GM18951 (cell line): ENCODE measurements at regions of chr10 and their contacts with region 1.

Region 1: DNA sequence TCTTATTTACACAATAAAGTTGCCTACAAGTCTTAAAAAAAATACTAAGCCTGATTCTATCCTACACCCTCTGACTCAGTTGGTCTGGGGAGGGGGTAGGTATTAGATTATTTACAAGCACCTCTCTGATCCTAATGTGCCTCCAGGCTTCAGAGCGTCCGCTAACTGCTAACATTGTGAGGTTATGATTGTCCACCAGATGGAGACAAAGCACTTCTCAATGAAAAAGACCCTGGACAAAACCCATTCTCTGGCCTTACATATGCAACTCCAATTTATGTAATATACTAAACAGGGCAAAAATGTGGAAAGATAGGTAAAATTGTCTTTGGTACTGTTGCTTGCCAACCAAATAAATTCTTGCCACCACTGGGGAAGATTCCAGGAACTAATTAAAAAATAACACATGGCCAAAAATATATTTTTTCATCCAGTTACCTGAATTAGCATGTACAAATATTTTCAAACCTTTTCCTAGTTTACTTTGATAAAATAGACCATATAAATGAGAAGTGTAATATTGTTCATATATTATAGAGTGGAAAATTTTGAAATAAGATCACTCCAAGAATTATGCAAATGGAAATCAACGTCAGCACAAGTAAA is 92.4 kb downstream of the KIF20B start:
- POLR2A ChIP-seq: no peak

Region 2: GRCh38 chr10:88990384-88991160 is 803.2 kb before region 1 on chr10 and contains the start of gene FAS:
- in situ Hi-C with region 1: no loop called
- POLR2A ChIP-seq: peak; percentile 83

Region 3: DNA sequence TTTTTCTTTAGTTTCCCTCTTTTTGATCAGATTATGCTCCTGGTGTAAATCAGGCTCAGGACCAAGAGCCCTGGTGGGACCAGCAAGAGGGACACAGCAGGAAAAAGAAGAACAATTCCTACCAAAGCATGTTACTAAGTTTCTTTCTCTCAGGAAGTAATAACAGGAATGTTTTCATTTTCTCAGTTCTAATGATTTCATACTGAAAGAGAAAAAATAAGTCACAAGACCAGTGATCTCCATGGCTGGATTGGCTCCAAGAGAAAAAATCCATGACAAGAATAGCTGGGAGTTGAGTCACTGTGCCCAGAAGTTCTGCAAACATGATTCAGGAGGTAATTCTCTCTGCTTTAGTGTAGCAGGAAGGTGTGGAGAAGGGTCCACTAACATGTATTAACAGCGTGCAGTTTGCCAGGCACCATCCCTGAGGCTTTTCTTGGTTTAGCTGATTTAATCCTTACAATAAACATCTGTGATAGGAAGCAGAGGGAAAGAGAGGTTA is 515.7 kb before region 1 on chr10:
- in situ Hi-C with region 1: no loop called
- POLR2A ChIP-seq: no peak

Region 4: DNA sequence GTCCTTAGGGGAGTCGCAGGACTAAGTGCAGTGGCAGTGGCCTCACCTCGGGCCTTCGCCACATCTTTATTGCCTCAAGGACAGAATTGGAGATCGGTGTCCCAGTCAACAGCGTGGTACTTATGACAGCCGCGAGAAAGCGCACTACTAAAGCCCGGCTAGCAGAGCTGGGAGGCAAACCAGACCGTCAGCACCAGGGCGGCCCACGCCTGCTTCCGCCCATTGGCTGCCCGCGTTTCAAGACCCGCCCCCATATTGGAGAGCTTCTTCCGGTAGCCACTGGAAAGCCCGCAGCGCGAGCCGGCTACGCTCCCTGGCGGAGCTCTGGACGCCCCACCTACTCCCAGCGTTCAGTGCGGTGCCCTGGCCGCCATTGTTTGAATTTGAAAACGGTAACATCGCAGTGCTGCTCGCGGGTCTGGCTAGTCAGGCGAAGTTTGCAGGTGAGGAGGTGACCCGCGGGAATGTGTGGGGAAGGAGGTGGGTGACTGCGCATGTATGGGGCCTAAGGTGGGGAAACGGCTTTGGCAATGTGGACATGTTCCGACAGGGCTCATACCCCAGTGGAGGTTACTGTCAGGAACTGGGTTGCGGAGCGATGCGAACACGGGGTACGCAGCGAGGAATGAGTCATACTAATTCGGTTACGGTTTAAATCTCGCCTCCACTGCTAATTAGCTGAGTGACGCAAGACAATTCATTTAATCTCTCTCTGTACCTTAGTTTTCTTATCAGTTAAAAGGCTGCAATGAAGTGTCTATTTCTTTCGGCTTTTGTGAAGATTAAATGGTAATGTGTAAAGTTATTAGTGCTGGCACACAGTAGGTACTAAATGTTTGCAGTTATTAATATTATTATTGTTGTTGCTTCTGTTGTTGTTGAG is 92.3 kb before region 1 on chr10 and contains the start of gene KIF20B:
- in situ Hi-C with region 1: no loop called
- POLR2A ChIP-seq: peak; percentile 89

Region 5: DNA sequence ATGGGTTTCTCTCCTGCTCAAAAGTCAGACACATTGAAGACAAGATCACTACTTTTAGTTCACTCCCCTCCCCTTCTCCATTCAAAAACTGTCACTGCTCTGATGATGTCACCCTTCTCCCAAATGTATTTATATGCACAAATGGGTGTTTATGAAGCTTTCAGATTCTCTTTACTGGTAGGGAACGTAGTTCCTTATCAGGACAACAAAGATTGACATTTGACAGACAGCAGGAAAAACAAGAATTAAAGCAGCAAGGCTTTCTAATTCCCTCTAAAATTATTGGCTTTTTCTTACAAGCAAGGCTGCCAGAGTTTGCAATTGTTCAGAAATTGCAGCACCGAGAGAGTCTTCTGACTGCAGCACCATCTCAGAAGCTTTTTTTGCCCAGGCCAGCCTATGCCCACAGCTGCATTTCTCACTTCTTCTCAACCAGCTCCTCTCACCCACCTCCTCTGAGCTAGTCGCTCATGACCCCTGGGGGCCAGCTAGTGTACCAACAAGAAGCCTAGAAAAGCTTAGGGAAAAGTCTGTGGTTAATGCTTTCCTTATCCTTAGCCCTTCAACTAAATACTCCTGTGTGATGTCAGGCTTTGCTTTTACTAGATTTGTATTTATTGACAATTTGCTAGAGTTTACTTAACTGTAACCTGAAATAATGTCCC is 799.0 kb after region 1 on chr10:
- in situ Hi-C with region 1: loop called (anchors 25 kb)
- POLR2A ChIP-seq: no peak

Region 6: GRCh38 chr10:90741926-90742565 is 948.3 kb after region 1 on chr10:
- in situ Hi-C with region 1: loop called (anchors 25 kb)
- POLR2A ChIP-seq: no peak

Region 7: DNA sequence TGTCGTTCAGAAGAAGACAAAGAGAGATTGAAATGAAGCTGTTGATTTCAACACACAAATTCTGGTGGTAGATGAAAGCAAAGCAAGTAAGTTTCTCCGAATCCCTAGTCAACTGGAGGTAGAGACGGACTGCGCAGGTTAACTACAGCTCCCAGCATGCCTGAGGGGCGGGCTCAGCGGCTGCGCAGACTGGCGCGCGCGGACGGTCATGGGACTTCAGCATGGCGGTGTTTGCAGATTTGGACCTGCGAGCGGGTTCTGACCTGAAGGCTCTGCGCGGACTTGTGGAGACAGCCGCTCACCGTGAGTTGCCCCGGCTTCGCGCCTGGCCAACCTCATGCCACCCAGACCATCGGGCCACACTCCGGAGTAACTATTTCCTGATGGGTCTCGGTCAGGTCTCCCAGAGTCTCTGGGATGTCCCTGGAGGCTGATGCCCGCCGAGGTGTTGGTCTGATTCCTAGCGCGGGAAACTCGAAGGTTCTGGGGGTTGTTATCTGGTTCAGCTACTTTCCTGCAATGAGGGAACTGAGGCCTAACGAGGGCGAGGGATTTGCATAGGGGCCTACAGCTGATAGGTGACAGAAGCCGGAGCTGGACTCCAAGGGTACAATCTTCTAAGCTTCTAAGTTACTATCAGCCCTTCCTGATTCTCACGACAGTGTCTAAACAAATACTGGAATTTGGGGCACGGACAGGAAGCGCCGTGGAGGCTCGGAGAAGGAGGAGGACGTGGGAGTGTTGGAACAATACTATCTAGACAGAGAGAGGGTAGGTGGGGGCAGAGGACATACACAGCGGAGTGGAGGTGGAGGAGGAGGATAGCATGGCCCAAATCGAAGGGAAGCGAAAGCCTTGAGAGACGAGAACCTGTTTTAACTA is 1078.3 kb after region 1 on chr10 and contains the start of gene RPP30:
- in situ Hi-C with region 1: loop called (anchors 25 kb)
- POLR2A ChIP-seq: peak; percentile 80